Mammary epithelial cell (primary cell): ENCODE measurements at regions of chr6 and their contacts with region 1.

Region 1: GRCh38 chr6:4567141-4567540 is 209.1 kb upstream of the CDYL start:
- DNase-seq: peak; percentile 66
- H3K4me3 ChIP-seq: no peak overlapping the region
- H3K27ac ChIP-seq: no peak overlapping the region
- H3K4me1 ChIP-seq: peaks cover 12% of the 10 kb centered on the region
- H3K27me3 ChIP-seq: no peaks in the 10 kb centered on the region
- CTCF ChIP-seq: no peak

Region 2: GRCh38 chr6:4435981-4436445 is 131.1 kb before region 1 on chr6:
- CTCF ChIA-PET with region 1: no interaction called
- dilution Hi-C with region 1: no loop called
- in situ Hi-C with region 1: no loop called
- intact Hi-C with region 1: no loop called
- DNase-seq: peak; percentile 46
- H3K4me3 ChIP-seq: no peak overlapping the region
- H3K27ac ChIP-seq: no peak overlapping the region
- H3K4me1 ChIP-seq: peaks cover 13% of the 10 kb centered on the region
- H3K27me3 ChIP-seq: no peaks in the 10 kb centered on the region
- CTCF ChIP-seq: no peak

Region 3: GRCh38 chr6:4543596-4543995 is 23.5 kb before region 1 on chr6:
- CTCF ChIA-PET with region 1: no interaction called
- dilution Hi-C with region 1: no loop called
- in situ Hi-C with region 1: no loop called
- intact Hi-C with region 1: no loop called
- DNase-seq: no peak
- H3K4me3 ChIP-seq: no peak overlapping the region
- H3K27ac ChIP-seq: no peak overlapping the region
- H3K4me1 ChIP-seq: no peaks in the 10 kb centered on the region
- H3K27me3 ChIP-seq: no peaks in the 10 kb centered on the region
- CTCF ChIP-seq: no peak

Region 4: DNA sequence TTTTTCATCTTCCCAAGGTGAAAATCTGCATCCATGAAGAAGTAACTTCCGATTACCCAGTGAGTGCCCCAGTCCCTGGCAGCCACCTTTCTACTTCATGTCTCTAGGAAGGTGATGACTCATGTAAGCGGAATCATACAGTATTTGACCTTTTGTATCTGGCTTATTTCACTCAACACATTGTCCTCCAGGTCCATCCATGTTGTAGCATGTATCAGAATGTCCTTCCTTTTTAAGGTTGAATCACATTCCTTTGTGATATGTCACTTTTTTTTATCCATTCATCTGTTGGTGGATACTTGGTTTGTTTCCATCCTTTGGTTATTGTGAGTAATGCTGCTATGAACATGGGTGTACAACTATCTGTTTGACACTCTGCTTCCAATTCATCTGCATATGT is 32.8 kb after region 1 on chr6:
- CTCF ChIA-PET with region 1: no interaction called
- dilution Hi-C with region 1: no loop called
- in situ Hi-C with region 1: no loop called
- intact Hi-C with region 1: loop called (anchors 2 kb)
- DNase-seq: peak; percentile 97
- H3K4me3 ChIP-seq: no peak overlapping the region
- H3K27ac ChIP-seq: peak overlapping the region; percentile 94
- H3K4me1 ChIP-seq: peaks cover 38% of the 10 kb centered on the region
- H3K27me3 ChIP-seq: no peaks in the 10 kb centered on the region
- CTCF ChIP-seq: no peak

Region 5: GRCh38 chr6:4610256-4610655 is 43.1 kb after region 1 on chr6:
- CTCF ChIA-PET with region 1: no interaction called
- dilution Hi-C with region 1: no loop called
- in situ Hi-C with region 1: no loop called
- intact Hi-C with region 1: no loop called
- DNase-seq: peak; percentile 47
- H3K4me3 ChIP-seq: no peak overlapping the region
- H3K27ac ChIP-seq: no peak overlapping the region
- H3K4me1 ChIP-seq: peaks cover 27% of the 10 kb centered on the region
- H3K27me3 ChIP-seq: no peaks in the 10 kb centered on the region
- CTCF ChIP-seq: no peak